ENCODE measurements at regions of chr5 and their contacts with region 1.

Region 1: DNA sequence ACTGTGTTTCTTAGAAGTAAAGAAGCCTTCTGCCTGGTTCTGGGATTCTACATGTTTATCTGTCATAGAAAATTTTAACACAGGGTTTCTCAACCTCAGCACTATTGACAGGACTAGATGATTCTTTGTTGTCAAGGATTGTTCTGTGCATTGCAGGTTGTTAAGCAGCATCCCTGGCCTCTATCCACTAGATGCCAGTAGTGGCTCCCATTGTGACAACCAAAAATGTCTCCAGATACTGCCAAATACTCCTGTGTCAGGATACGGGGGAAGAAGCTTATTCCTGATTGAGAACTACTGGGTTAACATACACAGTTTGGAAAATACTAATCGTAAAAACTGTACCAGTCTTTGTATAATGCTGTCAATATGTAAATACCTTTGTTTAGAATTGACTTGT is 167.1 kb downstream of the NIPBL start:
- DNase-seq: no peak
- H3K4me3 Mint-ChIP-seq: no peak overlapping the region
- H3K27ac Mint-ChIP-seq: no peak overlapping the region
- H3K4me1 Mint-ChIP-seq: no peaks in the 10 kb centered on the region
- H3K27me3 Mint-ChIP-seq: no peaks in the 10 kb centered on the region

Region 2: GRCh38 chr5:37029436-37029835 is 14.3 kb before region 1 on chr5:
- intact Hi-C with region 1: no loop called
- DNase-seq: no peak
- H3K4me3 Mint-ChIP-seq: no peak overlapping the region
- H3K27ac Mint-ChIP-seq: no peak overlapping the region
- H3K4me1 Mint-ChIP-seq: peaks cover under 1% of the 10 kb centered on the region
- H3K27me3 Mint-ChIP-seq: no peaks in the 10 kb centered on the region

Region 3: DNA sequence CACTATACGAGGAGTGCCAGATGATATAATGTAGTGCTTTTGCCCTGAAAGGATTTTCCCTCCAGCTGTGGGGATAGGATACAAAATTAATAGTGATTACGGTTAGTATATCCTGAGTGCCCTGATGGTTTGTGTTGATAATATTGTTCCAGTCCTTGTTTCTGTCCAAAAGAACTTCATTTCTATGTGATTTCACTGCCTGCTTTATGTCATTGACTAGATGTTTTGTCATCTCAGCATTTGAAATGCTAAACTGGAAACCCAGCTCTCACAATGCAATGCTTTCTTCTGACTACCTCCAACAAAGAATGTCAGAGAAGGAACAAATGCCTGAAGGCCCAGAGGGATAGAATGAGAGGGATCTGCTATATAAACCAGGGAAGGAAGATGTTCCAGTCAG is 10.7 kb after region 1 on chr5:
- intact Hi-C with region 1: no loop called
- DNase-seq: no peak
- H3K4me3 Mint-ChIP-seq: no peak overlapping the region
- H3K27ac Mint-ChIP-seq: no peak overlapping the region
- H3K4me1 Mint-ChIP-seq: peaks cover 17% of the 10 kb centered on the region
- H3K27me3 Mint-ChIP-seq: no peaks in the 10 kb centered on the region

Region 4: DNA sequence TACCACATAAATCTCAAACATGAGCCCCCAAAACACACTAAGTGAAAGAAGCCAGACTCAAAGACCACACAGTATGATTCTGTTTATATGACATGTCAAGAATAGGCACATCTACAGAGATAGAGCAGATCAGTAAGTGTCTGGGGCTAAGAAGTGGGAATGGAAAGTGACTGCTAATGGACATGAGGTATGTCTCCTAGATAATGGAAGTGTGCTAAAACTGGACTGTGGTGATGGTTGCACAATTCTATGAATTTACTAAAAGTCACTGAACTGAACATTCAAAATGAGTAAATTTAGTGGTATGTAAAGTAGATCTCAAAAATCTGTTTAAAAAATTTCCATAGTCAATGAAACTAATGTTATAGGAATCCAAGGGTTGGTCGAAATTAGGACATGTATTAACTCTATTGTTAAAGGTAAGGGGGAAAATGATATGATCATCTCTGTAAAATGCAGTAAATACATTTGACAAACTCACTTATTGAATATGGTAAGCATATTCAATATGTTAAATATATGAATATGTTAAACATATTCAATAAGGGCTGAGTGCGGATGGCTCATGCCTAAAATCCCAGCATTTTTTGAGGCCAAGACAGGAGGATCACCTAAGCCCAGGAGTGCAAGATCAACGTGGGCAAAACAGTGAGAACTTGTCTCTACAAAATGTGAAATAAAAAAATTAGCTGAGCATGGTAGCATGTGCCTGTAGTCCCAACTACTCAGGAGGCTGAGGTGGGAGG is 275.5 kb after region 1 on chr5:
- intact Hi-C with region 1: loop called (anchors 10 kb)
- DNase-seq: no peak
- H3K4me3 Mint-ChIP-seq: no peak overlapping the region
- H3K27ac Mint-ChIP-seq: peak overlapping the region; percentile 15
- H3K4me1 Mint-ChIP-seq: peaks cover 1% of the 10 kb centered on the region
- H3K27me3 Mint-ChIP-seq: no peaks in the 10 kb centered on the region